Esophagus muscularis mucosa (tissue), 4 donors: ENCODE measurements at regions of chr15 and their contacts with region 1.

Region 1: DNA sequence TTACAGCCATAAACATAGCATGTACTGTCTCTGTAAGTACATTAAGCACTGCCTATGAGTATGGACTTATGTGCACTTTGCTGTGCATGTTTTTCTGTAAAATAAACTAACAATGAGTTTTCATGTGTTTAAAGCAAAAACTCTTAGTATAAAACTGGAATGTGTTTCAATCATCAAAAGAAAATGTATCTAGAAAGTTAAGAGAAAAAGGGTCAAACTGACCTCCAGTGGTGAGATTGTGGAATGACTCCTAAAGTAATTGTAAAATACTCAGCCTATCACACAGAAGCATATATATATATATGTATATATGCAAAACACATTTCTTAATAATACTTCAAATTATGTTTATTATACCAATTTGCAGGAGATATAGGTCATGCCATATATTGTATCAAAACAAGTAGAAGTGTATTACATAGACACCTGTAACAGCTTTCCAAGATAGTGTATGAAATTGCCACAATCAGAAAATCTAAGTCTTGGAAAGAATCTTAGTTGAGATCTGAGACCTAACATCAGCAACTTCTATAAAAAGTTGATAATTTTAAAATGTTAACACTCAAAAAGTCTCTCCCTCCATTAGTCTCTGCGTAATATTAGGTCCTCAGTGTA is 199.6 kb downstream of the FMN1 start:
- DNase-seq: no peak
- H3K4me3 ChIP-seq: no peak overlapping the region
- H3K27ac ChIP-seq: no peak overlapping the region
- H3K4me1 ChIP-seq: peaks cover 0 to 31% (median 17%) of the 10 kb centered on the region in 4 donors
- H3K27me3 ChIP-seq: no peaks in the 10 kb centered on the region
- CTCF ChIP-seq: peak; percentile 69 to 75 (median 72)
- EP300 ChIP-seq: no peak
- POLR2A ChIP-seq: no peak

Region 2: GRCh38 chr15:32657198-32657883 is 337.6 kb before region 1 on chr15:
- intact Hi-C with region 1: loop called (anchors 5 kb)
- DNase-seq: peak; percentile 37
- H3K4me3 ChIP-seq: no peak overlapping the region
- H3K27ac ChIP-seq: no peak overlapping the region
- H3K4me1 ChIP-seq: peaks cover 0 to 23% (median 20%) of the 10 kb centered on the region in 4 donors
- H3K27me3 ChIP-seq: peaks cover 0 to 3% (median 0%) of the 10 kb centered on the region in 4 donors
- CTCF ChIP-seq: peak in 1 of 3 experiments; percentile 13
- EP300 ChIP-seq: no peak
- POLR2A ChIP-seq: no peak

Region 3: GRCh38 chr15:32849769-32850668 is 144.9 kb before region 1 on chr15:
- intact Hi-C with region 1: loop called (anchors 5 kb)
- DNase-seq: no peak
- H3K4me3 ChIP-seq: no peak overlapping the region
- H3K27ac ChIP-seq: no peak overlapping the region
- H3K4me1 ChIP-seq: peaks cover 0 to 3% (median 0%) of the 10 kb centered on the region in 4 donors
- H3K27me3 ChIP-seq: no peaks in the 10 kb centered on the region
- CTCF ChIP-seq: no peak
- EP300 ChIP-seq: no peak
- POLR2A ChIP-seq: no peak